ENCODE measurements at regions of chr1 and their contacts with region 1.

Region 1: GRCh38 chr1:40849801-40850592 is 12.2 kb downstream of the CITED4 start:
- DNase-seq: peak; percentile 94
- H3K4me3 Mint-ChIP-seq: peak overlapping the region; percentile 26
- H3K27ac Mint-ChIP-seq: peak overlapping the region; percentile 55
- H3K4me1 Mint-ChIP-seq: peaks cover 28% of the 10 kb centered on the region
- H3K27me3 Mint-ChIP-seq: no peaks in the 10 kb centered on the region

Region 2: DNA sequence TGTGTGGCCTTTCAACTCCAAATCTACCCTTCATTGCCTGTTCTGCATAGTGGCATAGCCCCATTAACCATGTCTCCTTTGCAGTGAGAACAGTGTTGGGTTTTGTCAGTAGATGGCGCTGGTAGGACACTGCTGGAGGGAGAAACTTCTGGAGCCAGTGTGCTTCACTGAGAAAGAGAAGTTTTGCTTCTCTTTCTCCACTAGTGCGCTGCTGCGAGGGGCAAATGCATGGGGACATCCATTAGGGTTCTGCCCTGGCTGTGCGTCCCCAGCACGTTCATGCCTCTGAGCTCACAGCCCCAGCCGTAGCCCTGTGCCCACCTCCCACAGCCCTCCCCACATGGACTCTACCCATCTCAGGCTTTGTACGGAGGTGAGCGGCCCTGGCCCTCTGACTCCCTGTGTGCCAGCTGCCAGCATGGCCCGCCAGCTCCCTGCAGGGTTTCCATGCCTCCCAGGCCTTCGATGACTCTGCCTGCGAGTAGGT is 237.6 kb before region 1 on chr1:
- intact Hi-C with region 1: loop called (anchors 1 kb)
- DNase-seq: peak; percentile 93
- H3K4me3 Mint-ChIP-seq: no peak overlapping the region
- H3K27ac Mint-ChIP-seq: no peak overlapping the region
- H3K4me1 Mint-ChIP-seq: no peaks in the 10 kb centered on the region
- H3K27me3 Mint-ChIP-seq: peaks cover 5% of the 10 kb centered on the region

Region 3: GRCh38 chr1:40691538-40692428 is 158.2 kb before region 1 on chr1 and contains the start of gene NFYC:
- intact Hi-C with region 1: loop called (anchors 10 kb)
- DNase-seq: peak; percentile 99
- H3K4me3 Mint-ChIP-seq: peak within 1 kb of the TSS; percentile 96
- H3K27ac Mint-ChIP-seq: peak within 1 kb of the TSS; percentile 99
- H3K4me1 Mint-ChIP-seq: peaks cover 49% of the 10 kb centered on the region
- H3K27me3 Mint-ChIP-seq: no peaks in the 10 kb centered on the region
- total RNA-seq, gene NFYC: 66.5 and 73.2 TPM in 2 replicates

Region 4: GRCh38 chr1:40783001-40783905 is 66.7 kb before region 1 on chr1 and contains the start of gene KCNQ4:
- intact Hi-C with region 1: no loop called
- DNase-seq: peak; percentile 74
- H3K4me3 Mint-ChIP-seq: peak within 1 kb of the TSS; percentile 80
- H3K27ac Mint-ChIP-seq: peak within 1 kb of the TSS; percentile 48
- H3K4me1 Mint-ChIP-seq: peaks cover 7% of the 10 kb centered on the region
- H3K27me3 Mint-ChIP-seq: peaks cover 37% of the 10 kb centered on the region
- total RNA-seq, gene KCNQ4: 1.4 and 1.5 TPM in 2 replicates

Region 5: GRCh38 chr1:40951943-40952743 is 102.1 kb after region 1 on chr1:
- intact Hi-C with region 1: loop called (anchors 2 kb)
- DNase-seq: peak; percentile 89
- H3K4me3 Mint-ChIP-seq: no peak overlapping the region
- H3K27ac Mint-ChIP-seq: no peak overlapping the region
- H3K4me1 Mint-ChIP-seq: peaks cover 9% of the 10 kb centered on the region
- H3K27me3 Mint-ChIP-seq: peaks cover 26% of the 10 kb centered on the region

Region 6: DNA sequence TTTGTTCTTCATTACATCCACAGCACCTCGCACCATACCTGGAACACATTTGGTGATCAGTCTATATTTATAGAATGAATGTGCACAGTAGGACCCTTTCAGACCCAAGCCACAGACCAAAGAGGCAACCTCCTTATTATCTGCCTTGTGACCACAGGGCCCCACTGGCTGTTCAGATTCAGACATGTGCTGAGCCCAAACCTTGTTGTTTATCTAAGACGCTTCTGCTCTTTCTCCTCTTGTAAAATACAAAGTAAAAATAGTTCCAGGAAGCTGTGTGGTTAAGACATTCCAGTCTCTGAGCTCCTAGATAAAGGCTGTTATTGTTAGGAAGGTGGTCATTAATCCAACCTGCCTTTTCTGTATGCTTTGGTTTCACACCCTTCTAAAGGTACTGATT is 395.7 kb after region 1 on chr1:
- intact Hi-C with region 1: no loop called
- DNase-seq: no peak
- H3K4me3 Mint-ChIP-seq: no peak overlapping the region
- H3K27ac Mint-ChIP-seq: no peak overlapping the region
- H3K4me1 Mint-ChIP-seq: peaks cover 16% of the 10 kb centered on the region
- H3K27me3 Mint-ChIP-seq: peaks cover 6% of the 10 kb centered on the region